Lower lobe of right lung (tissue), 2 donors: ENCODE measurements at regions of chr4 and their contacts with region 1.

Region 1: GRCh38 chr4:40149960-40150385 is 46.9 kb upstream of the RHOH start:
- DNase-seq: no peak
- ATAC-seq: peak; percentile 90 to 92
- H3K4me3 ChIP-seq: no peak overlapping the region
- H3K27ac ChIP-seq: no peak overlapping the region
- H3K4me1 ChIP-seq: no peaks in the 10 kb centered on the region
- H3K27me3 ChIP-seq: no peaks in the 10 kb centered on the region
- CTCF ChIP-seq: peak; percentile 94

Region 2: DNA sequence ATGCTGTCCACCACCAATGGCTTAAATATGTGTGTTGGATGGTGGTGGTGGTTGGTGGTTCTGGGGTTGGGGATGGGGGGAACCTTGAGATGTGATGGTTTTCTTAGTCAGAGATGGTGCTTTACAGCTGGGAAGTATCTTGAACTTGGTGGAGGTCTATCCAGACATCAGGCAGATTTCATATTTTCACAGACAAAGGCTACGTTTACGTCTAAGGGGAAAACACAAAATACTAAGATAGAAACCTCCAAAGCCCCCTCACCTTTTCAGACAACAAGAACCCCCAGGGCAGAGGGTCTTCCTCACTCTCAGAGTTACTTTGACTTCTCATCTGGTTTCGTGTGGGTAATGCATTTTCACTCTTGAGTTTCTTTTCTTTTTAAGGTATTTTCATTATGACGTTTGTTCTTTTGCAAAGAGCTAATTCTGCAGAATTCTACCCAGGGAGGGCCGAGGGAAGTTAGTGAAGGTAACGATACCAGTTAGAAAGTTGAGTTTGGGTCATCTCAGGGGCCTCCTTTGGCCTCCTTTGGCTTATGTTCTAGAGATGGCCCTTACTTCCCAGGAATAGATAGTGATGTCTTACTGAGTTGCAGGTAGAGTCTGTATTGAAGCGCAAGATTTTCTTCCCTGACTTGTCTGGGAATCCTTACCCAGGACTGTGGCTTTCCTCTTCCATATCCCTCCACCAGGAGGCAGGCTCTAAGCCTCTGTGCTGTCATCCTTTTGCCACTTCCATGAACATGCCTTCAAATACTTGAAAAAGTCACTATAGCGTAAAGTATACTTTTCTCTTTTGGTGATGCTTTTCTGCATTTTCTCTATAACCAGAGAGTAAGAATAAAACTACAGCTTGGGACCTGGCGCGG is 78.8 kb after region 1 on chr4:
- intact Hi-C with region 1: no loop called
- DNase-seq: no peak
- ATAC-seq: no peak
- H3K4me3 ChIP-seq: no peak overlapping the region
- H3K27ac ChIP-seq: no peak overlapping the region
- H3K4me1 ChIP-seq: no peaks in the 10 kb centered on the region
- H3K27me3 ChIP-seq: no peaks in the 10 kb centered on the region
- CTCF ChIP-seq: peak; percentile 25

Region 3: DNA sequence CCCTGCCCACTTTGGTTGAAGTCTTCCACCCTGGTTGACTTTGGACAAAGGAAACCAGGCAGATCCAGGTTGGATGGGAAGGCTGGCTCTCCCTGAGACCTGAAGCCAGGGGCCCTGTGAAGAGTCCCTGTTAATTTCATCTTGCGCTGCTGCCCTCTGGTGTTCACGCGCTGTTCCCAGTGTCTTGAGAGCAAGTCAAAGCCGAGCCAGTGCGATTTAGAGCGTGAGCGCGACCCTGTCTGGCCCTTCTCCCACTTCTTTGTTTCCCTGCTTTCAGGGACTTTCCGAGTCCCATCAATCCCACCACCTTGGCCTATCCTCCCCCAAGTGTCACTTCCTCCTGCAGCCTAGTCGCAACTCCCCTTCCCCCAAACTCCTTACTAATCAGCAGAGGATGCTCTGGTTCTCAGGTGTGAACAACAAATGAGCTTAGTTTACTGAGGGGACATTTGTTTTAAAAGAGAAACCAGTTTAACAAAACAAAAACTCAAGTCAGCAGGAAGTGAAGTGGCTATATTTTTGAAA is 159.3 kb after region 1 on chr4:
- intact Hi-C with region 1: loop called (anchors 10 kb)
- DNase-seq: peak; percentile 92
- ATAC-seq: peak; percentile 87 to 88
- H3K4me3 ChIP-seq: no peak overlapping the region
- H3K27ac ChIP-seq: no peak overlapping the region
- H3K4me1 ChIP-seq: peaks cover 33% of the 10 kb centered on the region
- H3K27me3 ChIP-seq: no peaks in the 10 kb centered on the region
- CTCF ChIP-seq: peak; percentile 93

Region 4: DNA sequence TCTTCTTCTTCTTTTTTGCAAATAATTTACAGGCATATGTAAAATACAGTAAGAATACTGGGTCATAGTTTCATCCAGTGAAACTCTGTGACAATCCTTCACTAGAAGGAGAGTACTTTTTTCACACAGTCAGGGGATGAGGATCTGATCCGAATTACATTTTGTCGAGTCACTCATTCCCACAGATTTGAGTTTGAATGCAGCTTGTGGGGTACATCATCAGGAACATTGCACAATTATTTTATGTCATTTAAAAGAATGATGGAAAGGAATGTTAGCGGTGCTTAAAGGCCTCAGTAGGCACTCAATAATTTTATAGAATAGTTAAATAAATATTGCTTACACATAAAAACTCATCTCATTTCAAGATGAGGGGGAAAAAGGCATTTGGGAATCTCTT is 273.8 kb after region 1 on chr4:
- intact Hi-C with region 1: no loop called
- DNase-seq: no peak
- ATAC-seq: no peak
- H3K4me3 ChIP-seq: no peak overlapping the region
- H3K27ac ChIP-seq: no peak overlapping the region
- H3K4me1 ChIP-seq: no peaks in the 10 kb centered on the region
- H3K27me3 ChIP-seq: no peaks in the 10 kb centered on the region
- CTCF ChIP-seq: no peak